Aorta (tissue), 5 donors: ENCODE measurements at regions of chr12 and their contacts with region 1.

Region 1: DNA sequence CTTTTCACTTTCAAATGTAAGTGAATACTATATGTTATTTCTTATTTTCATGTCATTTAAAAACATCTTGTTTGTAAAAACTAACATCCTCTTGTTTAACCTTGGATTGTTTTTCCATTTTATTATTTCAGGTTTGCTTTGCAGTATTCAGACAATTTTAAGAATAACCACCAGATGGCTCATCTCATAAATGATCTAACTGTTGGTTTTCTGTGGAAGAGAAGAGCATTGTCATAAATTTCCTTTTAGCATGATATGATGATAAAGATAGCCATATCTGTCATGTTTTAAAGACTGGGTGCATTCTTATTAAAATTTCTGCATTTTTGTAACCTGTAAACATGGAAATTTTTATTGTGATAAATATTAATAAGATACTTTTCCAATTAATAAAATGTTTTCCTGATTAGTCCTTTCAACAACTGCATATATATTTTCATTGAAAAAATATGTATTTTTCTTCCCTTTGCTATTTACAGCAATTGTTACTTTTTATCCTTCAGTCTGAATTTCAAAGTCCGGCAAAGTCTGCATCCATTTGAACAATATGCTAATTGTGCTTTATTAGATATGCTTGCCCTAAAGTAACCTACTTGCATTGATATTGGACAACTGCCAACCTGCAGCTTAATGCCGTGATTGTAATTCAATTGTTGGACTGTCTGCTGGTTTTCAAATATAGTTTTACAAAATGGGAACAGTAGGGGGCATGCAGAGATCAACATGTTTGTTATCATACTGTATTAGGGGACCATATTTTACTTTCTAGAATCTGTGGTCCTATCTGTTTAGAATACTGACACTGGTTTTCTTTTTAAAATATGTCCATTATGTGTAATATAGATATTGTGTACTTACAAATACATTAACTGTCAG is 163.4 kb downstream of the GARIN6 start:
- DNase-seq: no peak
- ATAC-seq: no peak
- H3K4me3 ChIP-seq: no peak overlapping the region
- H3K27ac ChIP-seq: no peak overlapping the region
- H3K4me1 ChIP-seq: no peaks in the 10 kb centered on the region
- H3K27me3 ChIP-seq: no peaks in the 10 kb centered on the region

Region 2: DNA sequence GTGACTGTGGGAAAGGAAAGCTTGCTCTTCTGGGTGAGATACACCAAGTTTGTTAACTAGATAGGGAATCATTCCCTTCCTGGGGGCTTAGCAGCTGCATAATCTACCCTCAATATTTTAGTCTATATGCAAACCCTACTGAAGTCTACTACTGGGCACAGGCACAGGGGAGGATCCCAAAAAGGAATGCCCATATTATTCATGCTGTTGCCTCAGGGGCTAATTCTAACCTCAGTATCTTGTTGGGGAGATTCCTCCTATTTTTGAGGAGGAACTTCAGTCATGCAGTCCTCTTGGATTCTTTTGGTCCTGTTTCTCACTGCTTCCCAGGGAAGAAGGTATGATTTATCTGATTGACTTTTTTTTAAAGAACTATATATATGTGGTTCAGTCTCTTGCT is 232.7 kb after region 1 on chr12:
- intact Hi-C with region 1: loop called in 1 of 2 experiments (anchors 10 kb)
- DNase-seq: no peak
- ATAC-seq: no peak
- H3K4me3 ChIP-seq: no peak overlapping the region
- H3K27ac ChIP-seq: no peak overlapping the region
- H3K4me1 ChIP-seq: no peaks in the 10 kb centered on the region
- H3K27me3 ChIP-seq: no peaks in the 10 kb centered on the region